ENCODE measurements at regions of chr4 and their contacts with region 1.

Region 1: DNA sequence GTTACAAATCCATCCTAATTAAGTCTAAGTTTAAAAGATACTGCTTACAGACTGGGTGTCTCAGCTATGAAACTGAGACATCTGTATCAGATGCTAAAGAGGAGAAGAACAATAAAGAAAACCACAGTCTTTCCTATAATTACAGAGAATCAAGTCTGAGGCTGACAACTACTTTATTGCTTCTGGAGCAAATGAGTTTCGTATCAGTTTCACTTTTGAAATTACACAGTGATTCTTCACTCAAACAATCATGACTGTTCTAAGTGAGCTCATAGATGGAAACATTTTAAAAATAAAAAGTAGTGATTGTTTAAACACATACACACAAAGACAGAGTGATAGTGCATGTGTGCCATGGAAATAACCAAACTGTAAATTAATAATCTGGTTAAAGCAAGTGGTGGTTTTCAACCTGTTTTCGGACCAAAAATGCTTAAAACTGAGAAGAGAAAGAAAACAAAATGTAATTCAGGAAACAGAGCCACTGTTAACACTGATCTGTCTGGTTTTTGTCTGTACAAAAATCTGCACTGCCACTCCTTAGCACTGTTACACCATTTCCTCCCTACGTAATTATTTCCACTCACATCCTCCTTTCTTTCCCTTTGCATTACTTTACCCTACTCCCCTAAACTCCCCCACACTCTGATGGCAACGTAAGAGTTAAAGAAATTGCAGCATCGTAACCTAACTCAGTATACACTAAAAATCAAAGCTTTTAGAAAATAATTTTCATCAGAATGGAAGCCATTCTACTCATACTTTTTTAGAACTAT is 12.5 kb downstream of the RFC1 start:
- DNase-seq: peak in 7 of 9 donors; percentile 39 to 71 (median 63)
- ATAC-seq: peak; percentile 86
- H3K4me3 ChIP-seq: peak overlapping the region; percentile 48
- H3K4me3 Mint-ChIP-seq: peak overlapping the region; percentile 82 to 89 (median 84)
- H3K27ac ChIP-seq: peak overlapping the region; percentile 70
- H3K27ac Mint-ChIP-seq: peak overlapping the region; percentile 88 to 98 (median 95)
- H3K4me1 ChIP-seq: peaks cover 17 to 34% of the 10 kb centered on the region in 2 donors
- H3K4me1 Mint-ChIP-seq: peaks cover 20 to 75% (median 59%) of the 10 kb centered on the region in 7 donors
- H3K27me3 ChIP-seq: no peaks in the 10 kb centered on the region
- H3K27me3 Mint-ChIP-seq: no peaks in the 10 kb centered on the region

Region 2: DNA sequence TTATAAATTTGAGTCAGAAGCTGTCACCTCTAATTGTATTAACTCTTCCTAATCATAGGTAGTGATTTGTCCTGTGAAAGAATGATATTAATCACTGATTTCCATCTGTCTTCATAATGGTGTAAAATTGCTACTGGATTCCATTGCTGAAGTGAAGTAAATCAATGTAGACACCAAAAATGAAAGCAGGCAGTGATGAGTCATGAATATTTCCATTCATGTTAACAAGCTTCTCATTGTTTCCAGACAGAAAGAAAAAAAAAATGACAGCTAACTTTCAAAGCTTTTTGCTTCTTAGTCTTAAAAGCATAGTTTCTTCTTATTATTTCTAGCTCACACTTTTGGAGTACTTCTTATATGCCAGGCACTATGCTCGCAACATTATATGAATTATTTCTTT is 464.5 kb before region 1 on chr4:
- CTCF ChIA-PET with region 1: no interaction called
- POLR2A ChIA-PET with region 1: no interaction called
- intact Hi-C with region 1: loop called in 1 of 2 experiments (anchors 5 kb)
- DNase-seq: peak in 1 of 9 donors; percentile 8
- ATAC-seq: no peak
- H3K4me3 ChIP-seq: no peak overlapping the region
- H3K4me3 Mint-ChIP-seq: peak overlapping the region in 2 of 10 donors; percentile 19 to 60
- H3K27ac ChIP-seq: no peak overlapping the region
- H3K27ac Mint-ChIP-seq: peak overlapping the region in 2 of 9 donors; percentile 33 to 84
- H3K4me1 ChIP-seq: no peaks in the 10 kb centered on the region
- H3K4me1 Mint-ChIP-seq: peaks cover 0 to 17% (median 6%) of the 10 kb centered on the region in 7 donors
- H3K27me3 ChIP-seq: no peaks in the 10 kb centered on the region
- H3K27me3 Mint-ChIP-seq: no peaks in the 10 kb centered on the region

Region 3: DNA sequence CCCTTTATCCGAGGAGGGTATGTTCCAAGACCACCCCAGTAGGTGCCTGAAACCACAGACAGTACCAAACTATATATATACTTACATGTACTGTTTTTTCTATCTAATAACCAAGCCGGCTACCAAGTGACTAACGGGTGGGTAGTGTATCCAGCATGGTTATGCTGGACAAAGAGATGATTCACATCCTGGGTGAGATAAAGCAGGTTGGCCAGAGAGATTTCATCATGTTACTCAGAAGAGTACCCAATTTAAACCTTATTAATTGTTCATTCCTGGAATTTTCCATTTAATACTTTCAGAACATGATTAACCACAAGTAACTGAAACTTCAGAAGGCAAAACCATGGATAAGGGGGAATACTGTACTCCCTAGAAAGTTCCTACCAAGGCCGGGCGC is 34.0 kb before region 1 on chr4:
- CTCF ChIA-PET with region 1: no interaction called
- POLR2A ChIA-PET with region 1: no interaction called
- intact Hi-C with region 1: loop called in 1 of 2 experiments (anchors 2 kb)
- DNase-seq: no peak
- ATAC-seq: no peak
- H3K4me3 ChIP-seq: no peak overlapping the region
- H3K4me3 Mint-ChIP-seq: no peak overlapping the region
- H3K27ac ChIP-seq: no peak overlapping the region
- H3K27ac Mint-ChIP-seq: no peak overlapping the region
- H3K4me1 ChIP-seq: no peaks in the 10 kb centered on the region
- H3K4me1 Mint-ChIP-seq: no peaks in the 10 kb centered on the region
- H3K27me3 ChIP-seq: no peaks in the 10 kb centered on the region
- H3K27me3 Mint-ChIP-seq: no peaks in the 10 kb centered on the region

Region 4: DNA sequence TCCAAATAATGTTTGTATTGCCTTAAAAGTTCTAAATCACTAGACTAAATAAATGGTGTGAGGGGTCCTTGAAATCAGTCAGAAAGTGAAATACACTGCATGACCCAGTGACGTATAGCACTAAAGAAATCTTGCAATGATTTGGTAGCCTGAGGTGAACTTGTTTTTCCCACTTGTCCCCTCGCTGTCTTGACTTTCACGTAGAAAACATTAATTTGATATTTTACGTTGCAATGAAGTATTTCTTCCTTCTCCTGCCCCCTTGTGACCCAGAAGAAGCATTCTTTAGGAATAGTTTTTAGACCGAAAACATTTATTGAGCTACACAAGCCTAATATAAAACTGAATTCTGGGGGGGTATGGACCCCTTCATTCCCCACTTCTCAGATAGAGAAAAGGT is 56.7 kb after region 1 on chr4:
- CTCF ChIA-PET with region 1: interaction called, 3 read pairs
- POLR2A ChIA-PET with region 1: no interaction called
- intact Hi-C with region 1: loop called in 1 of 2 experiments (anchors 10 kb)
- DNase-seq: no peak
- ATAC-seq: no peak
- H3K4me3 ChIP-seq: no peak overlapping the region
- H3K4me3 Mint-ChIP-seq: no peak overlapping the region
- H3K27ac ChIP-seq: no peak overlapping the region
- H3K27ac Mint-ChIP-seq: no peak overlapping the region
- H3K4me1 ChIP-seq: no peaks in the 10 kb centered on the region
- H3K4me1 Mint-ChIP-seq: no peaks in the 10 kb centered on the region
- H3K27me3 ChIP-seq: no peaks in the 10 kb centered on the region
- H3K27me3 Mint-ChIP-seq: peaks cover 0 to 10% (median 0%) of the 10 kb centered on the region in 5 donors

Region 5: GRCh38 chr4:39638354-39639240 is 284.9 kb after region 1 on chr4 and contains the start of gene SMIM14:
- CTCF ChIA-PET with region 1: no interaction called
- POLR2A ChIA-PET with region 1: no interaction called
- intact Hi-C with region 1: loop called in 1 of 2 experiments (anchors 10 kb)
- DNase-seq: peak; percentile 69 to 96 (median 82)
- ATAC-seq: peak; percentile 92
- H3K4me3 ChIP-seq: peak within 1 kb of the TSS; percentile 77
- H3K4me3 Mint-ChIP-seq: peak within 1 kb of the TSS; percentile 86 to 97 (median 94)
- H3K27ac ChIP-seq: peak within 1 kb of the TSS; percentile 79
- H3K27ac Mint-ChIP-seq: peak within 1 kb of the TSS; percentile 67 to 96 (median 86)
- H3K4me1 ChIP-seq: peaks cover 12 to 13% of the 10 kb centered on the region in 2 donors
- H3K4me1 Mint-ChIP-seq: peaks cover 22 to 51% (median 44%) of the 10 kb centered on the region in 7 donors
- H3K27me3 ChIP-seq: no peaks in the 10 kb centered on the region
- H3K27me3 Mint-ChIP-seq: peaks cover 0 to 27% (median 0%) of the 10 kb centered on the region in 5 donors
- total RNA-seq, gene SMIM14: 4.6 to 15.1 (median 12.9) TPM

Measured in naive thymus-derived CD4-positive, alpha-beta T cell (primary cell).